ENCODE measurements at regions of chr11 and their contacts with region 1.

Region 1: DNA sequence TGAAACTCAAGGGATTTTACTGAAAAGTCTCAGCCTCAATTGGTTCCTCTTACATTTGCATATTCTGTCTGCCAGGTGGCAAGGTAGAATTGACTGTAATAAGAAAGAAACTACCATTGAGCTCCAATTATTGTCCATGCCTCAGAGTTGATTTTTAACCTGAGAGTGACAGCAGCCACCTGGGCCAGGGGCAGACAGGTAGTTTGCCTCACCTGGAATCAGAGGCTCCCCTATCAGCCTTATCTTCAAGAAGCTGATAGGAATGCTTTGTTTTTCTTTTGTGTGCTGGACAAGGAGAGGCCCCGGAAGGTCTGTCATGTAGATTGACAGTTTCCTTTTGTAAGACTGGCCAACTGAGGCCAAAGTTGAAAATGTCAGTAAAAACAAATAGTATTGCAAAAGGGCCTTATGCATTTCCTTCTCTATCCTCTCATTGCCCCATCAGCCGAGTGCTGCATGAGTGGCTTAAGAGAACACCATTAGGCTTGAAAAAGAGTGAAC is 34.1 kb downstream of the CD44 start:
- DNase-seq: no peak
- ATAC-seq: no peak
- H3K4me3 Mint-ChIP-seq: no peak overlapping the region
- H3K27ac Mint-ChIP-seq: peak overlapping the region; percentile 83
- H3K4me1 Mint-ChIP-seq: peaks cover 97% of the 10 kb centered on the region
- H3K27me3 Mint-ChIP-seq: no peaks in the 10 kb centered on the region

Region 2: DNA sequence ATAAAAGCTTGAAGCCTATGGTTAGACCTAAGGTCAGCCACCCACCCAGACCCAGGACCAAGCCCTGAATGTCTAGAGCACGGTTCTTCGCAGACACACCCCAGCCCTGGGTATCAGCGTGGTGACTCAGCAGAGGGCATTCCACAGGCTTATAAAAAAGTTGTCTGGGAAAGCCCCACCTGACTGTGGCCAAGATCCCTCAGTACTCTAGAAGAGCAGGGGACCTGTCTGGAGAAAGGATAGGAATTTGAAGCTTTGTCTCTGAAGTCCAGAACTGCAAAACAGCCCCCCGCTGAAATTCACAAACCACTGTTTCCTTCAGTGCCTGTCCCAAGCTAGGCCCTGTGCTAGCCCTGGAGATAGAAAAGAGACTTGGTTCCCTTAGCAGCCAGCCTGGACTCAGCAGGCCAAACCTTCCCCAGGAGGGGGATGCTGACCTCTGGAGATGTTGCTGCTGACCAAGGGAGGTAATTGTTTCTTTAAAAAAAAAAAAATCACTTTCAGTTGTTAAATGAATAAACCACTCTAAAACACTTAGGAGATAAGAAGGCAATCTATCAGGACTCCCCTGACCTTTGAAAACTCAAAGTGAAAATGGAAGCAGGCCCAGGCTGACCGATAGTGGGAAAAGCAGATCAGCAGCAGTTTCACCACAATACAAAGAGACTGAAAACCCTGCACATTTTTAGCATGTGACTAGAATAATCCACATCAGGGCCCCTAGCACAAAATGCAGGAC is 929.2 kb before region 1 on chr11:
- CTCF ChIA-PET with region 1: no interaction called
- POLR2A ChIA-PET with region 1: no interaction called
- intact Hi-C with region 1: loop called in 1 of 2 experiments (anchors 10 kb)
- DNase-seq: peak; percentile 79
- ATAC-seq: peak; percentile 65
- H3K4me3 Mint-ChIP-seq: no peak overlapping the region
- H3K27ac Mint-ChIP-seq: no peak overlapping the region
- H3K4me1 Mint-ChIP-seq: peaks cover 88% of the 10 kb centered on the region
- H3K27me3 Mint-ChIP-seq: peaks cover 2% of the 10 kb centered on the region

Region 3: DNA sequence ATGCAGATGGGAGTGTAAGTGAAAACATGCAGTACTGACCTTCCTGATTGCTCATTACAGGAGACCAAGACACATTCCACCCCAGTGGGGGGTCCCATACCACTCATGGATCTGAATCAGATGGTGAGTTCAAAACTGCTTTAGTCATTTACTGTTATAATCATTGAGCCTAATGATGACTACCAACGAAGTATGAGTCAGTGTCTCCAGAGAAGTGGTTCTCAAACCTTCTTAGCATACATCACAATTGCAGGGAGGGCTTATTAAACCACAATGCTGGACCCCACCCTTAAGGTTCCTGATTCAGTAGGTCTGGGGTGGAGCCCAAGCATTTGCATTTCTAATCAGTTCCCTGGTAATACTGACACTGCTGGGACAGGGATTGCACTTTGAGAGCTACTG is 41.7 kb after region 1 on chr11:
- CTCF ChIA-PET with region 1: no interaction called
- POLR2A ChIA-PET with region 1: interaction called, 7 read pairs
- intact Hi-C with region 1: loop called in 1 of 2 experiments (anchors 2 kb)
- DNase-seq: peak; percentile 69
- ATAC-seq: peak; percentile 88
- H3K4me3 Mint-ChIP-seq: peak overlapping the region; percentile 5
- H3K27ac Mint-ChIP-seq: peak overlapping the region; percentile 86
- H3K4me1 Mint-ChIP-seq: peaks cover 72% of the 10 kb centered on the region
- H3K27me3 Mint-ChIP-seq: no peaks in the 10 kb centered on the region